Activated CD8-positive, alpha-beta T cell treated with anti-CD3 and anti-CD28 coated beads for 36 hours (primary cell): ENCODE measurements at regions of chr14 and their contacts with region 1.

Region 1: DNA sequence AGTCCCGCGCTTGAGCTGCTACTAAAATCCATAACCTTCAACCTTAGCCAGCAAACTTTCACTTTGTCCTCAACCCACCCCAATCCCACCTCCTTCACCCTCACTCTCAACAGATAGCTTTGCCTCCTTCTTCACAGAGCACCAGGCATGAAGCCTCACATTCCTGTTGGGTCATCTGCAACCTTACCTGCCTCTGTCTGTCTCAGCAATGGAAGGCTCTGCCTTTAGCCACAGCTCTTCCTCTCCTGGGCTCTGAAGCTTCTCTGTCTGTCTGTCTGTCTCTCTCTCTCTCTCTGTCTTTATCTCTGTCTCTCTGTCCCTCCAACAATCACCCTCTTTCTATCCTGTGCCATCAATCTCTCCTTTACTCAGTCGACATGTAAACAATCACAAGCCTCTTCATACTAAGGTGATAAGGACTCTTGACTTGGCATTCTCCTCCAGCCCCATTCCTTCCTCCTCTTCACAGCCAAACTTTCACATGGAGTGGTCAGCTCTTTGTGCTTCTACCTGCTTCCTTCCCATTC is 220.8 kb downstream of the SPTSSA start:
- DNase-seq: no peak
- ATAC-seq: no peak
- H3K4me3 Mint-ChIP-seq: no peak overlapping the region
- H3K27ac Mint-ChIP-seq: no peak overlapping the region
- H3K4me1 Mint-ChIP-seq: no peaks in the 10 kb centered on the region
- H3K27me3 Mint-ChIP-seq: peaks cover 15% of the 10 kb centered on the region
- CTCF ChIP-seq: no peak

Region 2: DNA sequence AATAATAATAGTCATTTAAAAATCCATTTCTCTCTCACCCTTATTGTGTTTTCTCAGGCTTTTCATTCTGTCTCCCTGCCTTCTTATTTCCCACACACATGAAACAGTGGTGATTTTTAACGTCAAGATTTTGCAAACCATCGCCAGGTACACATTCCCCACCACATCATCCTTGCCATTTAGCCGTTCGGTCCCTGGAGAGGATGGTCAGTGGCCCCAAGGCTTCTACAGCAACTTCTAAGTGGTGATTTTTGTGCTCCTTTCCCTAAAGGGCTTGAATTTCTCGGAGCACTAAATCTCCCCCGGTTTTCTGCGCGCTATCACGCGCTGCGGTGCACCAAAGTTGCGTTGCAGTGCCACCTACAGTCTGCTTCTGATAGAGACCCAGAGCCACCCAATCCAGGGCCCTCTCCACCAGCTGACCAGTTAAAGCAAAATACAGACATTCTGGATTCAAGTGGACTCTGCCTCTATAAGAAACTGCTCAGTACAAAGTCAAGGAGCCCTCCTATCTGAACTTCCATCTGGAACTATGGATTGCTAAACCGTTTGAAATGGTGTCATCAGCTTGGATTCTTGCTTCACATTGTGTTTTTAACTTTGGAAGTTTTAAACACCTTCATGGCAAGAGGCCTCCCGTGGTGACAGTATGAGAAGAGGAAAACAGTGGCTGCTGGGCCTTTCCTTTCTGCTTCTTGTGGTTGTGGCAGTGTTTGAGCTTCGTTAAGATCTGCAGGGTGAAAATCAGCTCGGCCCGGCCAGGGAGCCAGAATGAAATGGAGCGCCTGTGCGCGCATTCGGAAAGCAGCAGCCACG is 13.2 kb before region 1 on chr14:
- CTCF ChIA-PET with region 1: interaction called, 14 read pairs
- POLR2A ChIA-PET with region 1: no interaction called
- intact Hi-C with region 1: no loop called
- DNase-seq: peak; percentile 68
- ATAC-seq: peak; percentile 90
- H3K4me3 Mint-ChIP-seq: no peak overlapping the region
- H3K27ac Mint-ChIP-seq: no peak overlapping the region
- H3K4me1 Mint-ChIP-seq: no peaks in the 10 kb centered on the region
- H3K27me3 Mint-ChIP-seq: peaks cover 9% of the 10 kb centered on the region
- CTCF ChIP-seq: peak; percentile 79

Region 3: GRCh38 chr14:34258318-34258717 is 17.1 kb after region 1 on chr14:
- CTCF ChIA-PET with region 1: no interaction called
- POLR2A ChIA-PET with region 1: no interaction called
- intact Hi-C with region 1: no loop called
- DNase-seq: no peak
- ATAC-seq: no peak
- H3K4me3 Mint-ChIP-seq: no peak overlapping the region
- H3K27ac Mint-ChIP-seq: no peak overlapping the region
- H3K4me1 Mint-ChIP-seq: no peaks in the 10 kb centered on the region
- H3K27me3 Mint-ChIP-seq: peaks cover 11% of the 10 kb centered on the region
- CTCF ChIP-seq: no peak